ENCODE measurements at regions of chr17 and their contacts with region 1.

Region 1: GRCh38 chr17:65100316-65101140 is 36.6 kb upstream of the RGS9 start:
- DNase-seq: peak; percentile 81
- ATAC-seq: peak; percentile 75
- H3K4me3 Mint-ChIP-seq: peak overlapping the region; percentile 73
- H3K27ac Mint-ChIP-seq: peak overlapping the region; percentile 95
- H3K4me1 Mint-ChIP-seq: peaks cover 23% of the 10 kb centered on the region
- H3K27me3 Mint-ChIP-seq: no peaks in the 10 kb centered on the region
- CTCF ChIP-seq: peak; percentile 79

Region 2: GRCh38 chr17:64968652-64969501 is 131.7 kb before region 1 on chr17:
- CTCF ChIA-PET with region 1: interaction called, 13 read pairs
- POLR2A ChIA-PET with region 1: no interaction called
- intact Hi-C with region 1: loop called (anchors 5 kb)
- DNase-seq: peak; percentile 49
- ATAC-seq: peak; percentile 46
- H3K4me3 Mint-ChIP-seq: no peak overlapping the region
- H3K27ac Mint-ChIP-seq: peak overlapping the region; percentile 88
- H3K4me1 Mint-ChIP-seq: peaks cover 70% of the 10 kb centered on the region
- H3K27me3 Mint-ChIP-seq: no peaks in the 10 kb centered on the region
- CTCF ChIP-seq: no peak

Region 3: DNA sequence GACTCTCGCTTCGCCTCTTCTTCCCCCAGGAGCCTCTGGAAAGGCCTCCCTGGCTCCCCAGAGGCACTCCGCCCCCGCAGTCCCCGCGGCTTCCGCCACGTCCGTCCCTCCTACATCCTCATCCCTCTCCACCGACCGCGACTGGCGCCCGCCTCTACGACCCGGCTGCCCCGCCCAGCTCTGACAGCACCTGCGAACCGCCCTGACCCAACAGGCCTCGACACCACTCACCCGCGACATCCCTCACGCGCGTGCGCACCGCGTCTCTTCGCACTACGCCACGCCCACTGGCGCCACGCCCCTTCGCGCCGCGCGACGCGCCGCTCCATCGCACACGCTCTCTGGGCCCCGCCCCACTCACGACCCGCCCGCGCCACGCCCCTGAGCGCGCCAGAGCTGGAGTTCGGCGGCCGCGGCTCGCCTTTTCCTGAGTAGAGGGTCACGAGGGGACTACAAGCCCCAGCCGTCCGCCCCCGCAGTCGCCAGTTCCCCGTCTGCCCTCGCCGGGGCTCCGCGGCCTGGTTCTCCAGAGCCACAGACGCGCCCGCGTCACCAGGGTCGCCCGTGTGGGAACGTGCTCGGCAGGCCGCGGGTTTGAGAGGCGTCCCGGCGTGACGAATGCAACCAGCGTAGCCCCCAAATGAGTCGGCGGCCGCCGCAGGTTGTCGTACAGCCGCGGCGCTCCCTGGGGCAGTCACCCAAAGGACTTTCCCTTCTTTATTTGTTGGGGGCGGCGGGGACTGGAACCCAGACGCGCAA is 125.0 kb before region 1 on chr17:
- CTCF ChIA-PET with region 1: interaction called, 11 read pairs
- POLR2A ChIA-PET with region 1: no interaction called
- intact Hi-C with region 1: loop called (anchors 5 kb)
- DNase-seq: peak; percentile 97
- ATAC-seq: peak; percentile 78
- H3K4me3 Mint-ChIP-seq: peak overlapping the region; percentile 88
- H3K27ac Mint-ChIP-seq: peak overlapping the region; percentile 99
- H3K4me1 Mint-ChIP-seq: peaks cover 50% of the 10 kb centered on the region
- H3K27me3 Mint-ChIP-seq: no peaks in the 10 kb centered on the region
- CTCF ChIP-seq: no peak

Region 4: DNA sequence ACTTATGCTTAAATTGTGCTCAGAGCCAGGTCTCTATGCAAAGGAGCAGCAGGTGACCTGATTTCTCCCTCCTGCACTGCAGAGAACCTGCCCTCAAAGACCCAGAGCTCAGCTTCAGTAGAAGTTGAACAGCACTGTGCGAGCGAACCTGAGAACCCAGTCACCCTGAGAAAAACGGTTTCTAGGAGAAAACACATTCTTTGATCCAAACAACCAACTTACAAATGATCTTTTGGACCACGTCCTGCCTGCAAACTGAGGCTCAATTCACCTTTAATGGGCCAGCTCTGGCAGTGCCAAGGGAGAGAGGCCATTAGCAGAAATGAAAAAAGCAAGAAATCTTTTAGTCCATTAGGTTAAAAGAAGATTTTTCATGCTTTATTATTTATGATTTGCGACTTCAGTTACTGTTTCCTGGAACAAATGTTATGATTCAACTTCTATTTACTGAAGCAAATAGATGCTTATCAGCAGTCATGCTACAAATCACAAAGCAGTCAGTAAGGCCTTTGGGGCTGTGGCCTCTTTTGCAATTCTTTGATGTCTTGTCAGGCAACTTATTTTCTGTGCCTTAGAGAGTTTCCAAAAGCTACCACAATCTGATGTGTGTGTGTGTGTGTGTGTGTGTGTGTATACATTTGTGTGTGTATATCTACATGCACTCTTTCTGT is 115.5 kb before region 1 on chr17:
- CTCF ChIA-PET with region 1: interaction called, 11 read pairs
- POLR2A ChIA-PET with region 1: no interaction called
- intact Hi-C with region 1: no loop called
- DNase-seq: peak; percentile 72
- ATAC-seq: peak; percentile 45
- H3K4me3 Mint-ChIP-seq: peak overlapping the region; percentile 77
- H3K27ac Mint-ChIP-seq: peak overlapping the region; percentile 99
- H3K4me1 Mint-ChIP-seq: peaks cover 43% of the 10 kb centered on the region
- H3K27me3 Mint-ChIP-seq: no peaks in the 10 kb centered on the region
- CTCF ChIP-seq: no peak

Region 5: DNA sequence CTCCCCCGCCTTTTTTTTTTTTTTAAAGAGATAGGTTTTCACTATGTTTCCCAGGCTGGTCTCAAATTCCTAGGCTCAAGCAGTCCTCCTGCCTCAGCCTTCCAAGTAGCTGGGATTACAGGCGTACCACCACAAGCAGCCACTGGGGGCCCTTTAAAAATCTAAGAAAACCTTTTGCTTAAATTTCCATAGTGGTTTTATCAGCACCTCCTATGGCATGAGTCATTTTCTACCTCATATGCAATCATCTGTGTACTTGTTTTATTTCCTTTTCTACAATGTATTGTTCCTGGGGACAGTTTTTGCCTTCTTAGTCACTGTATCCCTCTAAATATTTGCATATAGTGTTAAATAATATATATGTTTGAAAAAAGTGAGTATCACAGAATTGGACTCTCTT is 73.2 kb before region 1 on chr17:
- CTCF ChIA-PET with region 1: interaction called, 3 read pairs
- POLR2A ChIA-PET with region 1: no interaction called
- intact Hi-C with region 1: loop called (anchors 2 kb)
- DNase-seq: peak; percentile 79
- ATAC-seq: peak; percentile 68
- H3K4me3 Mint-ChIP-seq: peak overlapping the region; percentile 56
- H3K27ac Mint-ChIP-seq: peak overlapping the region; percentile 96
- H3K4me1 Mint-ChIP-seq: peaks cover 81% of the 10 kb centered on the region
- H3K27me3 Mint-ChIP-seq: no peaks in the 10 kb centered on the region
- CTCF ChIP-seq: peak; percentile 84

Region 6: DNA sequence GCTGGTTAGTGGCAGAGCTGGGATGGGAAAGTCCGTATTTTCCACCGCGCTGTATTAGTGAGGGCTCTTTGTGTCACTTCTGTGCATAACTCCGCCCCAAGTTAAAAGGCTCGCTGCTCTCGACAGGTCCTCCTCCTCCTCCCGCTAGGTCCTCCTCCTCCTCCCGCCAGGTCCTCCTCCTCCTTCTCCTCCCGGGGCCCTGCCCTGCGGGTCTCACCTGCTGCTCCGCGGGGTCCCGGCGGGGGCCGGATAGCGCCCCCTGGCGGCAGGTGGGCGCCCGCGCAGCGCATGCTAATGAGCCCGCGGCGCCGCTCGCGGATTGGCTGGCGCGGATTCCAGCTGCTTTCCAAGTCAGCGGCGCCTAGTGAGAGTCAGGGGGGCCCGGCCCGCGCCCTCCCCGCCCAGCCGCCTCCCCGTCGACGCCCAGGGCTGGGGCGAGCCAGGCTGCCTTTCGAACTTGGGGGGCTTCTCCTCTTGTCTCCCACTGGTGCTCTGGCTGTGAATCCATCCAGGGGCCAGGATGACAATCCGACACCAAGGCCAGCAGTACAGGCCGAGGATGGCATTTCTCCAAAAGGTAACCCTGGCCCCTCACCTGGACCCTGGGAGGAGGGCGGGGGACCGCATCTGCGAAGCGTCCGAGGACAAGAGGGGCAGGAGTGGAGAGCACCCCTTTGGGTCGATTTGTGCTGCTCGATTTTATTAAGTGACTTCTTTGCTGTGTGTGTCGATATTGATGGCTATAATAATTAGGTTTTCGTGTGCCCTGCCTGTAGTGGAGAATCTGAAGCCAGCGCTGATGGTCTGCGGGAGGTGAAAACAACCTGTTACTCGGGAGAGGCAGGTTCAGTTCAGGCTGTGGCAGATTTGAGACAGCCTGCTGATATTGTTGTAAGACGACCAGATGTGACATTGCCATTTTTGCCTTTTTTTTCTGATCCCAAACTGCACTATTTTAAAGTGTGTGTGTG is 36.8 kb after region 1 on chr17 and contains the start of gene RGS9:
- CTCF ChIA-PET with region 1: interaction called, 27 read pairs
- POLR2A ChIA-PET with region 1: no interaction called
- intact Hi-C with region 1: no loop called
- DNase-seq: peak; percentile 84
- ATAC-seq: peak; percentile 97
- H3K4me3 Mint-ChIP-seq: peak within 1 kb of the TSS; percentile 47
- H3K27ac Mint-ChIP-seq: no peak within 1 kb of the TSS
- H3K4me1 Mint-ChIP-seq: peaks cover 18% of the 10 kb centered on the region
- H3K27me3 Mint-ChIP-seq: peaks cover 25% of the 10 kb centered on the region
- CTCF ChIP-seq: peak; percentile 89
- total RNA-seq, gene RGS9: 1.3 to 1.9 TPM

Region 7: DNA sequence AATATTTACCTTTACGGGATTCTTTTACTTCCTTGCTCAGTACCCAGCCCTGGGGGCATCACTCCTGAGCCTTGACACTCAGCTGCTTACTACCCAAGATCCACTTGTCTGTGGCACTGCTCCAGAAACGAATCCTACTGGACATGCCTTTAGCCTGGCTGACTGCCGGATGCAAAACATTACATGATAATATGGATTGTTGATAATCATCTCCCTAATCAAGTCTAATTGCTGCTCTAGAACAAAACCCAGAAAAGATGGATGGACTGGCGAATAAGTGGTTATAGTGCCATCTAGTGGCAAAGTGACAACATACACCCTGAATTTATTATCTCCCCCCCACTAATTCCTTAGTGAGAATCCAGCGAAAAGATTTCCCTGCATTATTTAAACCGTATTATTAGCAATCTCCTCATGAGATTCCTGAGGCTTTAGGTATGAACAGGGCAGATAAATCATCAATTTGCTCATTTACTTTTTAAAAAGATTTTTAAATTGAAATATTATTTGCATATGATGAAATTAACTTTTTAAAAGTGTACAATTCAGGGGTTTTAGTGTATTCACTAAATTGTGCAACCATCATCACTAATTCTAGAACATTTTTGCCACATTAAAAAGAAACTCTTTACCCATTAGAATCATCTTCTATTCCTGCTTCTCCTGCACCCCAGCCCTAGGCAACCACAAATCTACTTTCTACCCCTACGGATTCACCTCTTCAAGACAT is 98.3 kb after region 1 on chr17:
- CTCF ChIA-PET with region 1: interaction called, 15 read pairs
- POLR2A ChIA-PET with region 1: no interaction called
- intact Hi-C with region 1: no loop called
- DNase-seq: no peak
- ATAC-seq: no peak
- H3K4me3 Mint-ChIP-seq: no peak overlapping the region
- H3K27ac Mint-ChIP-seq: no peak overlapping the region
- H3K4me1 Mint-ChIP-seq: peaks cover 17% of the 10 kb centered on the region
- H3K27me3 Mint-ChIP-seq: peaks cover 1% of the 10 kb centered on the region
- CTCF ChIP-seq: peak; percentile 92

Measured in activated CD8-positive, alpha-beta T cell treated with anti-CD3 and anti-CD28 coated beads for 36 hours (primary cell).